Brain microvascular endothelial cell (primary cell): ENCODE measurements at regions of chr14 and their contacts with region 1.

Region 1: GRCh38 chr14:35079742-35080141 is 33.7 kb downstream of the FAM177A1 start:
- DNase-seq: no peak
- H3K4me3 ChIP-seq: no peak overlapping the region
- H3K27ac ChIP-seq: no peak overlapping the region
- H3K27me3 ChIP-seq: no peaks in the 10 kb centered on the region
- CTCF ChIP-seq: no peak

Region 2: GRCh38 chr14:35404449-35405303 is 324.9 kb after region 1 on chr14 and contains the start of gene NFKBIA:
- in situ Hi-C with region 1: loop called (anchors 25 kb)
- DNase-seq: peak; percentile 83
- H3K4me3 ChIP-seq: peak within 1 kb of the TSS; percentile 88
- H3K27ac ChIP-seq: peak within 1 kb of the TSS; percentile 98
- H3K27me3 ChIP-seq: no peaks in the 10 kb centered on the region
- CTCF ChIP-seq: peak; percentile 35